Naive thymus-derived CD8-positive, alpha-beta T cell (primary cell): ENCODE measurements at regions of chr19 and their contacts with region 1.

Region 1: DNA sequence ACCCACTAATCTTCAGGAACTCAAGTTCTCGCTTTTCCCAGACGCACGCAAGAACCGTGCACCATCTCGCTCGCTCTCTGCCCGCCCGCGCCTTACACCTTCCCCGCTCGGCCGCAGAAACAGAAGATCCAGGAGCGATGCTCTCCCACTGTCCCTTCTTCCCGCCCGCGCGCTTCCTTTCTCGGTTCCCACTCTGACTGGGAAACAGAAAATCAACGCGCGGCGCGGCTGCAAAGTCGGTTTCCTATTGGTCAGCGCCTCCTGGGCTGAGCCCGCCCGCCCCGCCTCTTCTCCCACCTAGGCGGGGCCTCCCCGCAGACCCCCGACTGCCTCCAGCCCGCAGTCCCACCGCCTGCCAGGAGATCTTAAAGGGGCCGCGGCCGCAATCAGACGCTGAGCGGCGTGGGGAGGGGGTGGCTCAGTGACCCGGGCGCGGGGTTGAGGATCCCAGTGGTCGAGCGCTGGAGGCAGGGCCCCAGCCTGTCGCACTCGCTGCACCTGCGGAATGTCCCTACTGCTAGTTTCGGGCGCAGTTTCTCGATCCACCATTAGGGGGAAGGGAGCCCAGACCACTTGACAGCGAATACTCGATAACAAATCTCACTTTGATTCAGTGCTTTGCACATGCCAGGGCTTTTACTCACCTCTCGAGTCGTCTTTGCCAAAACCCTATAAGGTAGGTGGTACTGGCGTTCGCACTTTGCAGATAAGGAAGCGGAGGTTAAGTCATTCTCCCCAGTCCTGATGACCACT is 685 bp upstream of the SLC25A23 start:
- DNase-seq: peak; percentile 92 to 98 (median 96)
- ATAC-seq: peak; percentile 84 to 85
- H3K4me3 Mint-ChIP-seq: peak overlapping the region; percentile 91 to 100 (median 96)
- H3K27ac Mint-ChIP-seq: peak overlapping the region; percentile 88 to 98 (median 92)
- H3K4me1 Mint-ChIP-seq: peaks cover 23 to 46% (median 32%) of the 10 kb centered on the region in 4 donors
- H3K27me3 Mint-ChIP-seq: no peaks in the 10 kb centered on the region

Region 2: GRCh38 chr19:6333440-6333839 is 126.8 kb before region 1 on chr19 and contains the start of gene ACER1:
- POLR2A ChIA-PET with region 1: no interaction called
- DNase-seq: no peak
- ATAC-seq: no peak
- H3K4me3 Mint-ChIP-seq: no peak within 1 kb of the TSS
- H3K27ac Mint-ChIP-seq: peak within 1 kb of the TSS in 1 of 10 donors; percentile 21
- H3K4me1 Mint-ChIP-seq: no peaks in the 10 kb centered on the region
- H3K27me3 Mint-ChIP-seq: no peaks in the 10 kb centered on the region
- polyA plus RNA-seq, gene ACER1: 1.4 to 2.6 (median 2.3) TPM

Region 3: GRCh38 chr19:6412447-6413091 is 47.7 kb before region 1 on chr19:
- POLR2A ChIA-PET with region 1: no interaction called
- DNase-seq: peak; percentile 29 to 68 (median 50)
- ATAC-seq: peak; percentile 83 to 87
- H3K4me3 Mint-ChIP-seq: no peak overlapping the region
- H3K27ac Mint-ChIP-seq: no peak overlapping the region
- H3K4me1 Mint-ChIP-seq: peaks cover 0 to 2% (median 0%) of the 10 kb centered on the region in 4 donors
- H3K27me3 Mint-ChIP-seq: no peaks in the 10 kb centered on the region

Region 4: DNA sequence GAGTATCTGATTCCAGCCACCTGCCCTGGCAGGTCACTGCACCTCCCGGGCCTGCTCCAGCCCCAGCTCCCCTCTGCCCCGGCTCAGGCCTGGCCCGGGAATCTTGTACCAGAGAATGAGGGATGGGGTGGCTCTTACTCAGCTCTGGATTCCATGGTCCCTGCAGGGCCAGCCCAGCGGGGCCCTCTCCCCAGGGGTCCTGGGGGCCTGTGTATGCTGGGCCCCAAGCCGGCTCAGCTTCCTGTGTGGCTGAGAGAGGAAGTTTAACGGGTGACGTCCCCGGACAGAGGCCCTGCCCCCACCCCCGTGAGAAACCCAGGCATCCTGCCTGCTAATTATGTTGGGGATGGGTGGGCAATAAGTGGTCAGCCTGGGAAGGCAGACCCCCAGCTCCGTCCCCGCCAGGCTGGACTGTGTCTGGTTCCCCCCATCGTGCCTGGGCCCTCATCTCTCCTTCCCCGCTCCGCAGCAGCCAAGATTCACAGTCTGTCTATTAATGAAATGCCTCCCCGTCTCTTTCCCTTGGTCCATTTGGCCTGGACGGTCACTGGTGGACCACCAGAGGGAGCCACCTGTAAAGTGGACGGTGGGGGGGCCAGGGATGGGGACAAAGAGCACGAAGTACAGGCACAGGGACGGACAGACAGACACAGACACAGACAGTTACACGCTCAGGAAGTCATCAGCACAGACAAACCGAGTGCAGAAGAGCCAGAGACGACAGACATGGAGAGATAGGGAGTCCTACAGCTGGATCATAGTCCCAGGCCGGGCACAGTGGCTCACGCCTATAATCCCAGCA is 21.5 kb after region 1 on chr19 and contains the start of gene DENND1C:
- POLR2A ChIA-PET with region 1: interaction called, 24 read pairs
- DNase-seq: peak; percentile 27 to 81 (median 58)
- ATAC-seq: peak; percentile 86 to 88
- H3K4me3 Mint-ChIP-seq: peak within 1 kb of the TSS; percentile 84 to 100 (median 98)
- H3K27ac Mint-ChIP-seq: peak within 1 kb of the TSS; percentile 93 to 100 (median 98)
- H3K4me1 Mint-ChIP-seq: peaks cover 20 to 46% (median 44%) of the 10 kb centered on the region in 4 donors
- H3K27me3 Mint-ChIP-seq: no peaks in the 10 kb centered on the region
- polyA plus RNA-seq, gene DENND1C: 35.4 to 106 (median 67.7) TPM

Region 5: DNA sequence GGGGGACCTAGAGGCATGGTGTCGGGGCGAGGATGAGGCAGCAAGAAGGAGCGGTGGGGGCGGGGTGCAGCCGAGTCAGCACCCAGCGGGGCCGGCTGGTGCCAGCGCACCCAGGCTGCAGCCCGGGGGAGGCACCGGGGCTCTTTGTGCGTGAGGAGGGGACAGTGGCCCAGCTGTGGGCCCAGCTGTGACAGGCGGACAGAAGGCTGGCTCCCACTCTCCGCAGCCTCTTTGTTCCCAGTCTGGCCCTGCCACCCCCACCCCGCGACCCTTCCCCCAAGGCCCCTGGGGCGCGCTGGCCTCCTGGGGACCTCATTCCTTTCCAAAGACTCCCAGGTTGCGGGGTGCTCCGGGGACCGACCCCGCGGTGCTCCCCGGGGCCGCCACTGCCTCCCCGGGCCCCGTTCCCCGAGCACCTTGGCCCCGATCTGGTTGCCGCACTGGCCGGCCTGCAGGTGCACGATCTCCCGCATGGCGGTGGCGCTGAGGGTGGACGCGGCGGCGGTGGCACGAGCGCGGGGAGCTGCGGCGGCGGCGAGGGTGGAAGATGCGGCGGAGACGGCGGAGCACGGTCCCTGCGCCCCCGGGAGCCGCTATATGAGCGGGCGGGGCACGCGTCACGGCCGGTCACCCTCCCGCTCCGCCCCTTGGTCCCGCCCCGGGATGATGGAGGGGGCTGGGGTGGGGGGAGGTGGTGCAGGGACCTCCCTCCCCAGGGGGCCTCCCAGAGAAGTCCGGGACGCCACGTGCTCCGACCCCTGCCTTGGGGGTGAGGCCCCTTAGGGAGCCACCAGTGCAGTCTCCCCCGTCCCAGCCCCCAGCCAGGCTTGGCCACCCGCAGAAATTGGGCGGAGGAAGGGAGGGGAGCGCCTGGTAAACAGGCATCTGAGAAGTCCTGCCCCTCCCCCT is 41.7 kb after region 1 on chr19 and contains the start of gene TUBB4A:
- POLR2A ChIA-PET with region 1: interaction called, 11 read pairs
- DNase-seq: peak in 8 of 10 donors; percentile 24 to 68 (median 38)
- ATAC-seq: peak; percentile 44 to 71
- H3K4me3 Mint-ChIP-seq: peak within 1 kb of the TSS; percentile 85 to 96 (median 90)
- H3K27ac Mint-ChIP-seq: peak within 1 kb of the TSS in 9 of 10 donors; percentile 43 to 90 (median 75)
- H3K4me1 Mint-ChIP-seq: peaks cover 5 to 29% (median 21%) of the 10 kb centered on the region in 4 donors
- H3K27me3 Mint-ChIP-seq: peaks cover 0 to 5% (median 0%) of the 10 kb centered on the region in 5 donors
- polyA plus RNA-seq, gene TUBB4A: 2.8 to 7.3 (median 5.2) TPM